HEK293T (cell line): ENCODE measurements at regions of chr2 and their contacts with region 1.

Region 1: DNA sequence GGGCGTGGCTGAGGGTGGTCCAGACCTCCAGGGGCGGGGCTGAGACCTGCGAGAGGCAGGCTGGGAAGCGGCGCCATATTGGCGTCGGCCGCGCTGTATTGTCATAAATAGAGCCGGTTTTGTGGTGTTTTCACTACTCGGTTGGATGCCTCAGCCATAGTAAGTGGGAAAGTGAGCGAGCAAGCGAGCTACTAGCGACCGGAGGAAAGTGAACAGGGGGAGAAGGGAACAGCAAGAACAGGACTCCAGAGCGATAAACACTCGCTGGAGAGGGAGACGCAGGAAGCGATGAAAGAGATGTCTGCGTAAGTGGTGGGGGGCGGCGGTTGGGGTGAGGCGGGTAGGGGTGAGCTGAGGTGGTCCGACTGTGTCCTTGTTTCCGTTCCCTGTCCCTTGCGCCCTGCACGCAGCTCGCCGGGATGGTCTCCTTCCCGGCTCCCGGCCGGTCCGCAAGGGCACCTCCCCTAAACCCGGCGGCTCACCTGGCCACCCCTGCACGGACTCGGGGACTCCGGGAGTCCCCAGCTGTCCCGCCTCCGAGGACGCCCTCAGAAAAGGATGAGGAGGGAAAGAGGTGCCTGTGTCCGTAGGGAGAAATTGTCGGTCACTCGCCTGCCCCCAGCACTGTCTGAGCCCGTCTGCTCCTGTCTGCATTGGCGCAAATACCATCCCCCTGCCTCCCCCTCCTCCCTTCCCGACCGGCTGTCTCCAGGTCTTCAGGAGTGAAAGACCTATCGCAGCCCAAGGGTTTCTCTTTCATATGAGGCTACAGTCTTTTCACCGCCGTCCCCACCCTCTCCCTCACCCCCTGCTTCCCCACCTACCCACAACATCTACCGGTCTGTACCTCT is at the start of gene PAPOLG:
- DNase-seq: peak; percentile 98

Region 2: DNA sequence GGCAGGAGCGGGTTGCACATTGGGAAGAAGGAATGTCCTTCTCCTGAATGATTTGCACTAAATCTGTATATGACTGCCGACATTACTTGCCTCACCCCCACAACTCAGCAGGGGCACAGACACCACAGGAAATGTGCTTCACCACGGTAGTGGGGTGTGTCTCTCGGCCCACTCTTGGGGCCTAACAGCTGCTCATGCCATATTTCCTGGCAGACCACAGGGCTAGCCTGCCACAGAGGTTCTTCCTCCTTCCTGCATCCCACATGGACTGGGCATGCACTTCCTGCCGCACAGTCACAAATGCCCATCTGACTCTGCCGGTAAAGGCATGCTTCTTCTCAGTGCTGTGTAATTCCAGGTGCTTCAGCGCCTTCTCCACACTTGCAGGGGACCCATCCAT is 10.7 kb before region 1 on chr2:
- CTCF ChIA-PET with region 1: no interaction called
- POLR2A ChIA-PET with region 1: interaction called, 16 read pairs
- DNase-seq: no peak